Head of caudate nucleus (tissue), 42 donors: ENCODE measurements at regions of chr6 and their contacts with region 1.

Region 1: GRCh38 chr6:52399511-52400312 is 20.4 kb upstream of the EFHC1 start:
- DNase-seq: peak in 30 of 42 donors; percentile 19 to 82 (median 56)

Region 2: DNA sequence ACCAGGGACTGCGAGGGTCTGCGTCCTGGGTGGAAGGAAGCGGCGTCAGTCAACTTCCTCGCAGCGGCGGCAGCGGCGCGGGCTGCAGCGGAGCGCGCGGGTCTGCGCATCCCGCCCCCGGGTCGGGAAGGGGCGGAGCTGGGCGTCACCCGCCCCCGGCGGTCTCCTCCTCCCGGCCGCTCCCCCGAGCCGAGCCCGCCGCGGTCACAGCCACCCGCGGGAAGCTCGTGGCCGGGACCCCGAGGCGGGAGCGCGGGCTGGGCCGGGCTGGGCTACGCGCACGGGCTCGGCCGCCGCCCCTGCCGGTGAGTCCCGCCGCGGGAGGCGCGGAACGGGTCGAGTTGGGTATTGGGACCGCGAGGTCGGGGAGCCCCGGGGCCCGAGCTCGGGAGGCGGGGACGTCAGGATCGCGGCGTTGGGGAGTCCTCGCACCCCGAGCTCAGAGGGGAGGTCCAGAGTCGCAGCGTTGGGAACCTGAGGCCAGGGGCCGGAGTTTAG is 37.7 kb before region 1 on chr6 and contains the start of gene PAQR8:
- intact Hi-C with region 1: loop called (anchors 5 kb)
- DNase-seq: peak; percentile 40 to 93 (median 87)

Region 3: DNA sequence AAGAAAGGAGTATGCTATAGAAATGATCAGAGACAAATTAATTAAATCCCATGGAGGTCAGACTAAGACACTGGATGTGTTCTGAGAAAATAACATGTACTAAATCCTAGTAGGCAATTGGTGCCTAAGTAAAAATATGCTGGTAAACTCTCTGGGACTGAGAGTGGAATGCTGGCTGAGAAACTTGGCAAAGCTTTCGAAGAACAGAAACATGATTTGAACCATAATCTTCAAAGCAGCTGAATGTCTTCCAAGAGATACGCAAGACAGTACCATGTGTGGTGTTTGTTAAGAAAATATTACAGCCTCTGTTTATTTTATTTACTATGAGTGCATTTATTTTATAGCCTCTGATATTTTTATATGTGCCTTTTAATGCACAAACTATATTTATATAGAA is 75.6 kb after region 1 on chr6:
- intact Hi-C with region 1: no loop called
- DNase-seq: no peak